ENCODE measurements at regions of chr17 and their contacts with region 1.

Region 1: DNA sequence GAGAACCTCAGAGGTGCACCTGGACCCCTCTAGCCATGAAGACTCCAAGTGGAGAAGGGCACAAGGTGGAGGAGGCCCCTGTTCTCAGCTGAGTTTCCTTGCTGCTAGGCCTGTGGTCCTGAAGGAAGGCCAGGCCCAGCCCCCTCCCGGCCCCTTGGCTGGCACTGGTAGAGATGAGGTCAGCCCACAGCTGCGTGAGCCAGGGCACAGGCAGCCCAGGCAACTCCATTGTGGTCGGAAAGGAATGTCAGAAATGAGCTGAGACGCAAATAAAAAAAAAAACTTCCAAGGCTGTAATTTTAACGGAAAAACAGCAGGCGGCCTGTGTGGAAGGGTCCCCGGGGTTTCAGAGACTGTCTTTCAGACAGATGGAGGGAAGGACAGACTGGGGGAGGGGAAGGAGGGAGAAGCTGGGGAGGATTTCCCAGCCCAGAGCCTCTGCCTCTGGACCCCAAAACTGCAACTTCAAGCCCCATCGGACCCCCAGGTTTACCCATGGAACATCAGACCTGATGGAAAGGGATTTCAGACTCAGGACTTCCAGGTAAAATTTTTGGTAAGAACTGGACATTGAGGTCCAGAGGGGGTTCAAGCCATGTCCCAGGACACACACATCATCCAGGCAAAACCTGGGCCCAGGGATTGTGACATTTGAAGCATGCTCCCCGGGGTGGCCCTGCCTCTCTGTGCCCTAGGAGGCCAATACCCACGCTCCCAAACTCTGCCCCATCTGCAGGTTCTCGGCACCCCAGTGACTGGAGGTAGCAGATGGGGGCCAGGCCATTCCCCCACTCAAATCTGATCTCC is 25.7 kb upstream of the MRPS23 start:
- DNase-seq: peak; percentile 84
- H3K4me3 Mint-ChIP-seq: no peak overlapping the region
- H3K27ac Mint-ChIP-seq: no peak overlapping the region
- H3K4me1 Mint-ChIP-seq: peaks cover 28% of the 10 kb centered on the region
- H3K27me3 Mint-ChIP-seq: no peaks in the 10 kb centered on the region
- CTCF ChIP-seq: peak; percentile 54

Region 2: DNA sequence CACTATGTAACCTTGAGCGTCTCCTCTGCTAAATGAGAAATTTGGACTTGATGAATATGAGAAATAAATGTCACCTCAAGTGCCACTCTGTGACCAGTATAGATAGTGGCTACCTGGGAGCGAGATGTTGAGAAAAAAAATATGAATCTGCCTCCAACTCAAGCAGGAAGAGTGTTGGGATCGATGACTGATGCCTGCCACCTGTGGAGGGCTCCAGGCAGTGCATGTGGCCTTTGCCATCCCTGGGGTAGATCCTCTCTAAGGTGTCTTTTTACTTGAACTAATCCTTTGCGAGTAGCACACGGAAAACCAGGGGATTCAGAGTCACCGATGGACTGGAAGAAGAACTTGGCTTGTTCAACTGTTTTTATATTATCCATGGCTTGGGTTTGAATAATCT is 139.8 kb before region 1 on chr17:
- CTCF ChIA-PET with region 1: no interaction called
- intact Hi-C with region 1: no loop called
- DNase-seq: peak; percentile 3
- H3K4me3 Mint-ChIP-seq: no peak overlapping the region
- H3K27ac Mint-ChIP-seq: no peak overlapping the region
- H3K4me1 Mint-ChIP-seq: no peaks in the 10 kb centered on the region
- H3K27me3 Mint-ChIP-seq: peaks cover 61% of the 10 kb centered on the region
- CTCF ChIP-seq: no peak

Region 3: DNA sequence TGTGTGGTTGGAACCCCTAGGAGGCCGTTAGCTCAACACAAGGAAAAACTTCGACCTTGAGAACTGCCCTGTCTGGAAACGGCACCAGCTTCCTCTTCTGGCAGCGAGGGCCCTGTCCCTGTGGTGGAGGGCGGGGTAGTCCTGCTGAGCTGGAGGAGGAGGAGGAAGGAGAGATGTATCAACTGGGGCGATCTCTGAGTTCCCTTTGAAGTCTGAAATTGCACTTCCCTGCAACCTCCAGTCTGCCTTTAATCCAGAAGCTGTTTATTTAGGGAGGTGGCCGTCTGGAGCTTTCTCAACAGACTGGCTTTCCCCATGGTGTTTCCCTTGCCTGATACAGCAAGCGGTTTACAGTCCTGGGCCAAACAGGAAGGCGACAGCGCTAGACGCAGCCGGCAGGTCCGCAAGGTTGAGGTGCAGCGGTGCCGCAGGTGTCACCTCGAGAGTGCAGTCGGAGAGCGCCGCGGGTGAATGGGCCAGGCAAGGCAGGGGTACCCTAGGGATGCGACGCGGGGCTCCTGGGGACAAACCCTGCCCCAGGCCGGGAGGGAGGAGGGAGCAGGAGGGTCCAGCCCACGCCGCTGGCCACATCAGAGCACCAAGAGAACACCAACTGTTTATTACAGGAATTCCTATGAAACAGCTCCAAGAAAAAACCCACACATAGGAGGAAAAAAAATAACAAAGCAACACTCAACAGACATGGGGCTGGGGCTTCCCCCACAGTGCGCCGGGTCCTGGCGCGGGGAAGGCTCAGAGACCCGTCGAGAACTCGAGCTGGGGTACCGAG is 14.3 kb before region 1 on chr17:
- CTCF ChIA-PET with region 1: interaction called, 11 read pairs
- intact Hi-C with region 1: no loop called
- DNase-seq: peak; percentile 53
- H3K4me3 Mint-ChIP-seq: peak overlapping the region; percentile 73
- H3K27ac Mint-ChIP-seq: peak overlapping the region; percentile 71
- H3K4me1 Mint-ChIP-seq: no peaks in the 10 kb centered on the region
- H3K27me3 Mint-ChIP-seq: no peaks in the 10 kb centered on the region
- CTCF ChIP-seq: no peak

Region 4: DNA sequence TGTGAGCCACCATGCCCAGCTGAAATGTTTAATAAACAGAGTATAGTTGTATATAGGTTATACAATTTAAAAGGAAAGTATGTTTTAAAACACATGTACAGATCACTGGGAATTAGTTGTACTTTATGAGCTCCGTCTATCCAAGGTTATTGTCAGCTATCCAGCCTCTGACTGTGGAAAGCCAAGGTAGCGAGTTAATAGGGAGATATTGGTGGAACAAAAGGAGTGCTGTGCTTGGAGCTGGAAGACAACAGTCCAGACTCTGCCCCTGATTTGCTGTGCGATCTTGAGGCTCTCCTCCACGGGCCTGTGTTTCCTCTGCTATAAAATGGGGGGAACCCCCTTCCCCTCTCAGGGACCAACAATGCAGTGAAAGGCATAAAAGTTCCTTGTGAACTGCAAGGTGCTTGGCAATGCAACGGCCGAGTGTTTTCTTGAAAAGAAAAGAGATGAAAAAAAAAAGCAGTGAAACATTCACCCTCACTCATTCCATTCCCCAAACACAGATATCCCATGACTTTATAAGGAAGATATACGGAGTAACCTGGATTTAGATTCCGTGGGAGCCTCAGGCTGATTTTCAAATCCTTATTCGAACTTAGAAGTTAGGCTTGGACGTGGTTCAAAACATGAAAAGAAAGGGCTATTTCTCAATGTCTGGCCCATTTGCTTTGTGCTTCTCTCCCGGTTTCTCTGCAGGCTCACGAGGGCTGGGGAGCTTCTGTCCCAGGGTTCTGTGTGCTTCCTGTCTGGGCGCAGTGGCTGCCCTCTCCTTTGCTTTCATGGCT is 45.6 kb after region 1 on chr17:
- CTCF ChIA-PET with region 1: no interaction called
- intact Hi-C with region 1: no loop called
- DNase-seq: no peak
- H3K4me3 Mint-ChIP-seq: no peak overlapping the region
- H3K27ac Mint-ChIP-seq: no peak overlapping the region
- H3K4me1 Mint-ChIP-seq: peaks cover 27% of the 10 kb centered on the region
- H3K27me3 Mint-ChIP-seq: no peaks in the 10 kb centered on the region
- CTCF ChIP-seq: no peak

Region 5: DNA sequence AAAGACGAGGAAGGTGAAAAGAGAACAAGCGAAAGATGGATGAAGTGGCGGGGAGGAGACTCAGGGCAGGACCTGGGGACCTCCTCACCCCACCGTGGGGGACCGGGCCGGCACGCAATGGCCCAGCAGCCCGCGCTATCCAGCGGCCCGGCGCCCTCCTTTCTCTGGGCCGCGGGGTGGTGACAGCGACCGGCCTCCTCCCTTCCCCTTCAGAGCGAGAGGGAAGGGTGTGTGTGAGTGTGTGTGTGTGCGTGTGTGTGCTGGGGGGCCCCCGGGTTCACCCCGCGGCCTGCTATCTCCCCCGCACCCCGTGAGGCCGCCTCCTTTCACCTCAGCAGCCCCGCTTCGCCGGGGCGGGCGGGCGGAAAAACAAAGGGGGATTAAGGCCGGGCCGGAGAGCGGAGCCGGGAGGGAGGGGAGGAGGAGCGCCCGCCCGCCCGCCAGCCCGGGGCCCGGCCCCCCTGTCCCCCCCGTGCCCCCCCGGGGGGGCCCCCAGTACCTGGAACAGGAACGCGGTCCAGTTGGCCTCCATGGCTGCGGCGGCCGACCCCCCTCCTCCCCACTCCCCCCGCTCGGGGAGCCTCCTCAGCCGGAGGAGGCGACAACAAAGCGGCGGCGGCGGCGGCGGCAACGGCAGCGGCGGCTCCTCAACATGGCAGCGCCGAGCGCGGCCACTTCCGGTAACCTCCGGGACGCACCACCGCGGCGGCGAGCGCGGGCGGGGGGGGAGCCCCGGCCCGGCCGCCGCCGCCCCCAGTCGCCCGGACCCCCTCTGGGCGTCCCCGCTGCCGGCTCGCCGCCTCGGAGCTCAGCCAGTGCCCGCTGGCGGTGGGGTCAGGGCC is 112.3 kb after region 1 on chr17 and contains the start of gene VEZF1:
- CTCF ChIA-PET with region 1: interaction called, 4 read pairs
- intact Hi-C with region 1: loop called (anchors 5 kb)
- DNase-seq: peak; percentile 66
- H3K4me3 Mint-ChIP-seq: peak within 1 kb of the TSS; percentile 79
- H3K27ac Mint-ChIP-seq: peak within 1 kb of the TSS; percentile 93
- H3K4me1 Mint-ChIP-seq: peaks cover 15% of the 10 kb centered on the region
- H3K27me3 Mint-ChIP-seq: no peaks in the 10 kb centered on the region
- CTCF ChIP-seq: no peak
- total RNA-seq, gene VEZF1: 33.4 and 40.4 TPM in 2 replicates

Measured in Calu3 (cell line).